Esophagus muscularis mucosa (tissue), 4 donors: ENCODE measurements at regions of chr21 and their contacts with region 1.

Region 1: GRCh38 chr21:38805328-38806152 is at the start of gene ETS2:
- DNase-seq: peak; percentile 95
- H3K4me3 ChIP-seq: peak within 1 kb of the TSS; percentile 87 to 97 (median 95)
- H3K27ac ChIP-seq: peak within 1 kb of the TSS; percentile 95 to 99 (median 96)
- H3K4me1 ChIP-seq: peaks cover 12 to 53% (median 40%) of the 10 kb centered on the region in 4 donors
- H3K27me3 ChIP-seq: no peaks in the 10 kb centered on the region
- CTCF ChIP-seq: no peak
- EP300 ChIP-seq: no peak
- POLR2A ChIP-seq: peak; percentile 86
- total RNA-seq, gene ETS2: 31.1 to 175 (median 63.8) TPM

Region 2: GRCh38 chr21:38733973-38734546 is 71.5 kb before region 1 on chr21:
- intact Hi-C with region 1: loop called (anchors 2 kb)
- DNase-seq: peak; percentile 98
- H3K4me3 ChIP-seq: peak overlapping the region; percentile 33 to 48 (median 40)
- H3K27ac ChIP-seq: peak overlapping the region; percentile 42 to 75 (median 63)
- H3K4me1 ChIP-seq: peaks cover 7 to 9% (median 7%) of the 10 kb centered on the region in 4 donors
- H3K27me3 ChIP-seq: peaks cover 0 to 11% (median 0%) of the 10 kb centered on the region in 4 donors
- CTCF ChIP-seq: peak; percentile 93 to 97 (median 93)
- EP300 ChIP-seq: no peak
- POLR2A ChIP-seq: no peak

Region 3: DNA sequence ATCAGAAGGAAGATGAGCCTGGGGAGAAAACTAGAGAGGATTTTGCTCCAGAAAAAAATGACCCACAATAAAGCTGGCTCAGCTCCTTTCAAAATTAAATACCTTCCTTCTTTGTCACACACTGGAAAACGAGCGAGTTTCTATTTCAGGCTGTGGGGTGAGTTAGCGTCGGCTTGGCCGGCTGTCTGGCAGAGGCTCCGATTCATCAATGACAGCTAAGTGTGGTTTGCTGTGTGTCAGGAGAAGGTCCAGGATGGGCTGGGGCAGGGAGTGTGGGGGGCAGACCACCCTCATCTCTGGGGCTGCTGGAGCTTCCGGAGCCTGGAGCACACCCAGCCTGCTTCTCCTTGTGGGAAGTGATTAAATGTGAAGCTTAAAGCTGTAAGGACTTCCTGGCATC is 120.4 kb after region 1 on chr21:
- intact Hi-C with region 1: loop called (anchors 5 kb)
- DNase-seq: peak; percentile 93
- H3K4me3 ChIP-seq: peak overlapping the region; percentile 38 to 47 (median 41)
- H3K27ac ChIP-seq: peak overlapping the region; percentile 79 to 87 (median 85)
- H3K4me1 ChIP-seq: peaks cover 21 to 31% (median 29%) of the 10 kb centered on the region in 4 donors
- H3K27me3 ChIP-seq: no peaks in the 10 kb centered on the region
- CTCF ChIP-seq: no peak
- EP300 ChIP-seq: peak; percentile 45
- POLR2A ChIP-seq: no peak

Region 4: GRCh38 chr21:39004634-39005501 is 199.3 kb after region 1 on chr21:
- intact Hi-C with region 1: loop called (anchors 5 kb)
- DNase-seq: no peak
- H3K4me3 ChIP-seq: no peak overlapping the region
- H3K27ac ChIP-seq: peak overlapping the region; percentile 55 to 80 (median 72)
- H3K4me1 ChIP-seq: peaks cover 37 to 46% (median 41%) of the 10 kb centered on the region in 4 donors
- H3K27me3 ChIP-seq: no peaks in the 10 kb centered on the region
- CTCF ChIP-seq: no peak
- EP300 ChIP-seq: no peak
- POLR2A ChIP-seq: no peak

Region 5: GRCh38 chr21:39125752-39126485 is 320.4 kb after region 1 on chr21:
- intact Hi-C with region 1: loop called (anchors 2 kb)
- DNase-seq: no peak
- H3K4me3 ChIP-seq: no peak overlapping the region
- H3K27ac ChIP-seq: no peak overlapping the region
- H3K4me1 ChIP-seq: peaks cover 0 to 8% (median 5%) of the 10 kb centered on the region in 4 donors
- H3K27me3 ChIP-seq: no peaks in the 10 kb centered on the region
- CTCF ChIP-seq: peak; percentile 52 to 66 (median 66)
- EP300 ChIP-seq: no peak
- POLR2A ChIP-seq: no peak